ENCODE measurements at regions of chr7 and their contacts with region 1.

Region 1: GRCh38 chr7:45239486-45239885 is 81.9 kb downstream of the RAMP3 start:
- DNase-seq: no peak
- ATAC-seq: no peak
- H3K4me3 ChIP-seq: no peak overlapping the region
- H3K27ac ChIP-seq: peak overlapping the region; percentile 41 to 82 (median 60)
- H3K4me1 ChIP-seq: peaks cover 0 to 33% (median 15%) of the 10 kb centered on the region in 12 donors
- H3K27me3 ChIP-seq: peaks cover 0 to 4% (median 0%) of the 10 kb centered on the region in 9 donors
- CTCF ChIP-seq: no peak
- POLR2A ChIP-seq: no peak

Region 2: DNA sequence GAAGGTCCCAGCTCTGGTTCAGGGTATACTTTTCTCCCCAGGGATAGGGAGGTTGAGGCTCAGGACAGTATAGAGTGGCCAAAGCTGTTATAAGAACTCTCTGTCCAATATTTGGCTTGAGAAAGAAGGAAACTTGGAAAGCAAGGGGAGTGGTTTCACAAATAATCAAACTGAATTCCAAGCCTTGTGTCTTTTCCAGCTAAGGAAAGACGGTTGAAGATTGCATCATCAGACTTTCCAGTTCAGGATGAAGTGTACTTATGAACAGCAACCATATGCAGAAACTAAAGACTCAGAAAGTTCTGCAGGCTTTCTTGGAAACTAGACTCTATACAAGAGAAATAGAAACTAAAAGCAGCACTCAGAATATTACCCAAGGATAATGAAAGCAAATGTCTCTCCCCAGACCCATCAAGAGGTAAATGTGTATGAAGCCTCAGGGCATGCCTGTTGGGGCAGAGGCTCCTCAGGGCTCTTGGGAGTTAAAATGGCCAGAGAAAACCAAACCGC is 35.5 kb before region 1 on chr7:
- intact Hi-C with region 1: loop called in 1 of 10 experiments (anchors 5 kb)
- DNase-seq: no peak
- ATAC-seq: peak; percentile 55 to 73 (median 64)
- H3K4me3 ChIP-seq: peak overlapping the region in 9 of 12 donors; percentile 13 to 56 (median 31)
- H3K27ac ChIP-seq: peak overlapping the region in 11 of 12 donors; percentile 6 to 92 (median 65)
- H3K4me1 ChIP-seq: peaks cover 0 to 36% (median 10%) of the 10 kb centered on the region in 12 donors
- H3K27me3 ChIP-seq: no peaks in the 10 kb centered on the region
- CTCF ChIP-seq: no peak
- POLR2A ChIP-seq: no peak

Region 3: GRCh38 chr7:45211066-45211465 is 28.4 kb before region 1 on chr7:
- intact Hi-C with region 1: loop called in 3 of 10 experiments (anchors 1 to 2 kb)
- DNase-seq: peak in 4 of 5 donors; percentile 61 to 72 (median 66)
- ATAC-seq: peak; percentile 86 to 97 (median 92)
- H3K4me3 ChIP-seq: no peak overlapping the region
- H3K27ac ChIP-seq: peak overlapping the region in 10 of 12 donors; percentile 56 to 90 (median 74)
- H3K4me1 ChIP-seq: peaks cover 0 to 30% (median 12%) of the 10 kb centered on the region in 12 donors
- H3K27me3 ChIP-seq: peaks cover 0 to 21% (median 0%) of the 10 kb centered on the region in 9 donors
- CTCF ChIP-seq: no peak
- POLR2A ChIP-seq: no peak

Region 4: GRCh38 chr7:45278763-45279398 is 39.4 kb after region 1 on chr7:
- intact Hi-C with region 1: no loop called
- DNase-seq: no peak
- ATAC-seq: no peak
- H3K4me3 ChIP-seq: no peak overlapping the region
- H3K27ac ChIP-seq: no peak overlapping the region
- H3K4me1 ChIP-seq: no peaks in the 10 kb centered on the region
- H3K27me3 ChIP-seq: peaks cover 0 to 2% (median 0%) of the 10 kb centered on the region in 9 donors
- CTCF ChIP-seq: no peak
- POLR2A ChIP-seq: no peak